ENCODE measurements at regions of chr15 and their contacts with region 1.

Region 1: DNA sequence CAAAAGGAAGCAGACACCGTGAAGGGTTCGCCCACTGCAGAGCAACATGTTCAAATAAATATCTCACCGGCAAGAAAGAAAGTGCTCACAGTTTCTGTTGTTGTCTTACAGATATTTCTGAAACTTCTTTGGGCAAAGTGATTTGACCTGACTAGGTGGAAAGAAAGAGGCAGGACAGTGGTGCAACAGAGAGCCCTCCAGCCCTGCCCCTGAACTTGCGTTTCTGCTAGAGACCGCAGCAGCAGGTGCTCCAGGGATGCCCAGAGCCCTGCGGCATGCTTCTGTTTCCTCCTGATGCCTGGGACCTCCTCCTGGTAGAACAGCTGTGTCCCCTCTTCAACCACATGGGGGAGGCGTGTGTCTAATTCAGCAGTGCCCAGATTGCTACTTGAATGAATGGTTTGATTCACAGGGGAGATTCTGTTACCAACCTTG is 123.4 kb downstream of the ATP10A start:
- DNase-seq: peak; percentile 89
- H3K4me3 ChIP-seq: no peak overlapping the region
- H3K27ac ChIP-seq: peak overlapping the region; percentile 80 to 88 (median 86)
- H3K4me1 ChIP-seq: peaks cover 26 to 81% (median 75%) of the 10 kb centered on the region in 4 donors
- H3K27me3 ChIP-seq: peaks cover 0 to 4% (median 0%) of the 10 kb centered on the region in 4 donors
- CTCF ChIP-seq: peak; percentile 45 to 57 (median 55)
- EP300 ChIP-seq: no peak
- POLR2A ChIP-seq: no peak

Region 2: GRCh38 chr15:25670025-25670554 is 69.6 kb before region 1 on chr15:
- intact Hi-C with region 1: loop called (anchors 2 kb)
- DNase-seq: no peak
- H3K4me3 ChIP-seq: peak overlapping the region; percentile 13 to 39 (median 28)
- H3K27ac ChIP-seq: peak overlapping the region; percentile 85 to 94 (median 90)
- H3K4me1 ChIP-seq: peaks cover 21 to 73% (median 68%) of the 10 kb centered on the region in 4 donors
- H3K27me3 ChIP-seq: no peaks in the 10 kb centered on the region
- CTCF ChIP-seq: no peak
- EP300 ChIP-seq: no peak
- POLR2A ChIP-seq: no peak

Region 3: DNA sequence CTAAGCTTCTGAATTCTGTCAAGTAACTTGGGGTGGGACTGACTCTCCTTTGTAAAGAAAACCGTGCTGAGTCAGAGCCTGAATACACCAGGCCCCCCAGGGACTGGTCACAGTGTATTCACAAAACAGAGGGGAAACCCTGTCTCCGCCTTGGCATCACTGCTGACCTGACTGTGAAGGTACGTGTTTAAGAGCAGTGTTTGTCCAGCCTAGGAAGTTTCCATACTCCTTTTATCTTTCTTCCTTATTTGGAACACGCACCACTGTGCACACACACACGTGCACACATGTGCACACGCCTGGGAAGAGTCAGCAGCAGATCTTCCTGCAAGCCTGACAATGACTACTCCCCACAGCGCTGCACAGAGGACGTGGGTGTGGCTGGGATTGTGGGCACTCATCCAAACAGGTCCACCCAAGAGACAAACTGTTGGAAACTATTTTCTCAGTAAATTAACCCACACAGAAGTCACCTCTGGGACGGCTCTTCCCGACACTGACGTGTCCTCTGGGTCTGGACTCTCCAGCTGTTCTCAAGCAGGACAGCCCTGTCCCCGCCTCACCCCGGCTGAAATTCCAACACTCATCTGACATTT is 35.7 kb after region 1 on chr15:
- intact Hi-C with region 1: loop called (anchors 5 kb)
- DNase-seq: peak; percentile 94
- H3K4me3 ChIP-seq: no peak overlapping the region
- H3K27ac ChIP-seq: peak overlapping the region; percentile 63 to 77 (median 67)
- H3K4me1 ChIP-seq: peaks cover 12 to 62% (median 57%) of the 10 kb centered on the region in 4 donors
- H3K27me3 ChIP-seq: no peaks in the 10 kb centered on the region
- CTCF ChIP-seq: no peak
- EP300 ChIP-seq: no peak
- POLR2A ChIP-seq: no peak

Region 4: DNA sequence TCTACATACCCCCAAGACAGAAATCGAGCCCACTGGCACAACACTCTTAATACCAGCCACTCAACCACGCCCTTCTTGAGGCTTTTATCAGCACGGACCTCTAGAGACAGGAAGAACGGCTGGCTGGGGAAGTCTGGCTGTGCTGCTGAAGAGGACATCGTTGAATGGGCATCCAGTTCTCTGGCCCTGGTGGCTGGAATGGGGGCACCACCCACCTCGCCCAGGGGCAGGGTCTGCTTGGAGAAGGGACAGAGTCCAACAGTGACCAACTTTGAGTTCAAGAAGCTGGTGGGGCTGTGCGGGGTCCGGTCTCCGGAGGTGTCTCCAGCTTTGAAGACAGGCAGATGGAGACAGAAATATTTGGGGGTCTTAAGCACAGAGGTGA is 45.9 kb after region 1 on chr15:
- intact Hi-C with region 1: no loop called
- DNase-seq: no peak
- H3K4me3 ChIP-seq: peak overlapping the region in 1 of 4 donors; percentile 7
- H3K27ac ChIP-seq: peak overlapping the region; percentile 75 to 85 (median 78)
- H3K4me1 ChIP-seq: peaks cover 31 to 81% (median 79%) of the 10 kb centered on the region in 4 donors
- H3K27me3 ChIP-seq: no peaks in the 10 kb centered on the region
- CTCF ChIP-seq: no peak
- EP300 ChIP-seq: no peak
- POLR2A ChIP-seq: no peak

Region 5: GRCh38 chr15:25863111-25863967 is 123.6 kb after region 1 on chr15 and contains the start of gene ATP10A:
- intact Hi-C with region 1: loop called (anchors 5 kb)
- DNase-seq: no peak
- H3K4me3 ChIP-seq: peak within 1 kb of the TSS; percentile 73 to 91 (median 78)
- H3K27ac ChIP-seq: peak within 1 kb of the TSS; percentile 91 to 97 (median 94)
- H3K4me1 ChIP-seq: peaks cover 9 to 60% (median 46%) of the 10 kb centered on the region in 4 donors
- H3K27me3 ChIP-seq: no peaks in the 10 kb centered on the region
- CTCF ChIP-seq: no peak
- EP300 ChIP-seq: peak; percentile 35
- POLR2A ChIP-seq: no peak
- total RNA-seq, gene ATP10A: 23.9 to 51.9 (median 32.6) TPM

Region 6: DNA sequence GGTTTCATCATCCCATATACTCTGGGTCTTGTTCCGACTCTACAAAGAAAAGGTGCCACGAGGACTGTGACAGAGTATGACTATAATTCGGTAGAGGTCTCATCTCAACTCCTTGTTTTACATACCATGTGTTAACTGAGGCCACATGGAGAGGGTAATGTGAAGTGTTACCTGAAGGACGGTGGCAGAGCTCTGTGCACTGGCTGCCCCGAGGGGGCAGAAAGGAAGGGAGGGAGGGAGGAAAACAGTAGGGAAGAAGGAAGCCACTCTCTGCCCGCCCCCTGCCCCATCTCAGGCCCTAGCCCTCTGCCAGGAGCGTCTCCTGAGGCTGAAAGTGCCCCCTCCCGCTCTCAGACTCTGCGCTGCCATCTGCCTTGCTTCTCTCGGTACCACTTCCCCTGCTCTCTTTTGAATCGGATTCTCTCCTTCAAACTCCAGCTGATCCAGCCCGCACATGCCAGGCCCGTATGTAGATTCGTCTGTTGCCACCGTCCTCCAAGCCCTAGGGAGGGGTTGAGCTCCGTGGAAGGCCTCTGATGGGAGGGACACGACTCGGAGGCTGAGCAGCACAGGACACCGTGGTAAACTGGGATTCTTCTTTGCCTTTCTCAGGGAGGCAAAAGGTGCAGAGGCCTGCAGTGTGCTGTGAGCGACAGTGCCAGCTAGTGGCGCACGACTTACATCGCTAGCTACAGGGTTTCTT is 193.9 kb after region 1 on chr15:
- intact Hi-C with region 1: loop called (anchors 5 kb)
- DNase-seq: peak; percentile 93
- H3K4me3 ChIP-seq: peak overlapping the region; percentile 35 to 42 (median 37)
- H3K27ac ChIP-seq: peak overlapping the region; percentile 67 to 77 (median 74)
- H3K4me1 ChIP-seq: peaks cover 0 to 23% (median 19%) of the 10 kb centered on the region in 4 donors
- H3K27me3 ChIP-seq: no peaks in the 10 kb centered on the region
- CTCF ChIP-seq: peak; percentile 66 to 76 (median 72)
- EP300 ChIP-seq: no peak
- POLR2A ChIP-seq: no peak